Ascending aorta (tissue), 2 donors: ENCODE measurements at regions of chr17 and their contacts with region 1.

Region 1: GRCh38 chr17:35242805-35243560 is at the start of gene SLFN5:
- DNase-seq: peak; percentile 93 to 98
- H3K4me3 ChIP-seq: peak within 1 kb of the TSS; percentile 74 to 85
- H3K27ac ChIP-seq: peak within 1 kb of the TSS; percentile 96 to 97
- H3K4me1 ChIP-seq: peaks cover 9 to 26% of the 10 kb centered on the region in 2 donors
- H3K27me3 ChIP-seq: no peaks in the 10 kb centered on the region
- CTCF ChIP-seq: no peak
- total RNA-seq, gene SLFN5: 13.0 TPM

Region 2: DNA sequence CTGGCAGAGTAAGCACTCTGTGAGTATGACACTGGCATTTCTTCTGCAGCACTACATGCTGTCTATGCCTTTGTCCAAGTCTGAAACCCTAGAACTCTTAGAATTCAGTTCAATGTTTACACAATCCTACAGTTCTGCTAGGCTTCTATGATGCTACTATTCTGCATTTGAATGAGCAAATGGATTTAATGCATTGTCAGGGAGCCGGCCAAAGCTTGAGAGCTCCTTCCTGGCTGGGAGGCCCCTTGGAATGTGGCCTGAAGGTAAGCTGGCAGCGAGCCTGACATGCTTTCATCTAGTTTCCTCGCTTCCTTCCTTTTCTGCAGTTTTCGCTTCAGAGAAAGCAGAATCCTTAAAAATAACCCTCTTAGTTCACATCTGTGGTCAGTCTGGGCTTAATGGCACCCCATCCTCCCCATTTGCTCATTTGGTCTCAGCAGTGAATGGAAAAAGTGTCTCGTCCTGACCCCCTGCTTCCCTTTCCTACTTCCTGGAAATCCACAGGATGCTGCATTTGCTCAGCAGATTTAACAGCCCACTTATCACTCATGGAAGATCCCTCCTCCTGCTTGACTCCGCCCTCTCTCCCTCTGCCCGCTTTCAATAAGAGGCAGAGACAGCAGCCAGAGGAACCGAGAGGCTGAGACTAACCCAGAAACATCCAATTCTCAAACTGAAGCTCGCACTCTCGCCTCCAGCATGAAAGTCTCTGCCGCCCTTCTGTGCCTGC is 988.2 kb before region 1 on chr17 and contains the start of gene CCL2:
- intact Hi-C with region 1: loop called (anchors 5 kb)
- DNase-seq: peak in 1 of 2 donors; percentile 86
- H3K4me3 ChIP-seq: peak within 1 kb of the TSS; percentile 46 to 56
- H3K27ac ChIP-seq: peak within 1 kb of the TSS; percentile 87 to 89
- H3K4me1 ChIP-seq: peaks cover 39 to 60% of the 10 kb centered on the region in 2 donors
- H3K27me3 ChIP-seq: no peaks in the 10 kb centered on the region
- CTCF ChIP-seq: no peak
- total RNA-seq, gene CCL2: 162 TPM

Region 3: GRCh38 chr17:35254107-35254802 is 11.3 kb after region 1 on chr17:
- intact Hi-C with region 1: loop called (anchors 1 kb)
- DNase-seq: peak; percentile 14 to 92
- H3K4me3 ChIP-seq: no peak overlapping the region
- H3K27ac ChIP-seq: peak overlapping the region; percentile 75 to 76
- H3K4me1 ChIP-seq: peaks cover 3 to 13% of the 10 kb centered on the region in 2 donors
- H3K27me3 ChIP-seq: no peaks in the 10 kb centered on the region
- CTCF ChIP-seq: no peak

Region 4: GRCh38 chr17:35373534-35373983 is 130.6 kb after region 1 on chr17 and contains the start of gene SLFN11:
- intact Hi-C with region 1: loop called (anchors 2 kb)
- DNase-seq: peak; percentile 79 to 95
- H3K4me3 ChIP-seq: peak within 1 kb of the TSS; percentile 78 to 87
- H3K27ac ChIP-seq: peak within 1 kb of the TSS; percentile 97
- H3K4me1 ChIP-seq: peaks cover 0 to 10% of the 10 kb centered on the region in 2 donors
- H3K27me3 ChIP-seq: no peaks in the 10 kb centered on the region
- CTCF ChIP-seq: no peak
- total RNA-seq, gene SLFN11: 30.3 TPM

Region 5: GRCh38 chr17:35568541-35568940 is 325.6 kb after region 1 on chr17:
- intact Hi-C with region 1: loop called (anchors 5 kb)
- DNase-seq: no peak
- H3K4me3 ChIP-seq: peak overlapping the region; percentile 80 to 93
- H3K27ac ChIP-seq: peak overlapping the region; percentile 72 to 84
- H3K4me1 ChIP-seq: peaks cover 3 to 18% of the 10 kb centered on the region in 2 donors
- H3K27me3 ChIP-seq: no peaks in the 10 kb centered on the region
- CTCF ChIP-seq: no peak